GM12878 (cell line): ENCODE measurements at regions of chr17 and their contacts with region 1.

Region 1: GRCh38 chr17:79892459-79892858 is 53.2 kb upstream of the CBX4 start:
- DNase-seq: no peak
- ATAC-seq: no peak
- H3K4me3 ChIP-seq: no peak overlapping the region
- H3K27ac ChIP-seq: no peak overlapping the region
- H3K4me1 ChIP-seq: no peaks in the 10 kb centered on the region
- H3K27me3 ChIP-seq: peaks cover 1 to 4% of the 10 kb centered on the region in 2 experiments; a peak in 1 of 4 replicates
- CTCF ChIP-seq: no peak
- EP300 ChIP-seq: no peak
- POLR2A ChIP-seq: no peak
- RAD21 ChIP-seq: no peak

Region 2: DNA sequence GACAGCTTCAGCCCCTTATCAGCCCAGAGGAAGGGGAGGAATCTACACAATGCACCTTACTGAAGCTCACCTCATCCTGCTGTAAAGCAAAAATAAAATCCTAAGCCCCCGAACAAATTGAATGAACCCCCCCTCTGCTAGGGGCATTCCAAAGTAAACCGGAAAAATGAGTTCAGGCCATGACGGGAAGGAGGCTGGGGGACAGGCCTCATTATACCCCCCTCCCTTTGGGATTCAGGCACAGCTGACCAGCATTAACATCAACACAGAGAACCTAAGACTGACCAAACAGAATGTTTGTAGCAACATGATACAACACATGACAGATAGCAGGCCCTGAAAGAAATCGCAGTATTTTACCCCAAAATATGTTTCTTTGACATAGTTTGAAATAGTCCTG is 1379.5 kb before region 1 on chr17:
- CTCF ChIA-PET with region 1: no interaction called
- POLR2A ChIA-PET with region 1: interaction called, 13 read pairs
- RAD21 ChIA-PET with region 1: no interaction called
- SMC1A ChIA-PET with region 1: no interaction called
- in situ Hi-C with region 1: no loop called
- intact Hi-C with region 1: no loop called
- DNase-seq: no peak
- ATAC-seq: no peak
- H3K4me3 ChIP-seq: no peak overlapping the region
- H3K27ac ChIP-seq: no peak overlapping the region
- H3K4me1 ChIP-seq: no peaks in the 10 kb centered on the region
- H3K27me3 ChIP-seq: no peaks in the 10 kb centered on the region
- CTCF ChIP-seq: no peak
- EP300 ChIP-seq: no peak
- POLR2A ChIP-seq: no peak
- RAD21 ChIP-seq: no peak

Region 3: GRCh38 chr17:79658811-79659207 is 233.7 kb before region 1 on chr17:
- CTCF ChIA-PET with region 1: no interaction called
- POLR2A ChIA-PET with region 1: no interaction called
- RAD21 ChIA-PET with region 1: no interaction called
- SMC1A ChIA-PET with region 1: no interaction called
- in situ Hi-C with region 1: no loop called
- intact Hi-C with region 1: no loop called
- DNase-seq: no peak
- ATAC-seq: 0 out of 3 replicates have a peak, but pooled peaks have one; percentile 31
- H3K4me3 ChIP-seq: no peak overlapping the region
- H3K27ac ChIP-seq: no peak overlapping the region
- H3K4me1 ChIP-seq: no peaks in the 10 kb centered on the region
- H3K27me3 ChIP-seq: peaks cover 0 to 2% of the 10 kb centered on the region in 2 experiments; a peak in 2 of 4 replicates
- CTCF ChIP-seq: peak; percentile 16 to 28 (median 21); a peak in 1 of 6 replicates
- EP300 ChIP-seq: no peak
- POLR2A ChIP-seq: no peak
- RAD21 ChIP-seq: no peak

Region 4: GRCh38 chr17:80260069-80260554 is 367.7 kb after region 1 on chr17:
- CTCF ChIA-PET with region 1: no interaction called
- POLR2A ChIA-PET with region 1: no interaction called
- RAD21 ChIA-PET with region 1: no interaction called
- SMC1A ChIA-PET with region 1: no interaction called
- in situ Hi-C with region 1: no loop called
- intact Hi-C with region 1: no loop called
- DNase-seq: no peak
- ATAC-seq: peak; percentile 38
- H3K4me3 ChIP-seq: peak overlapping the region; percentile 53; the same call in 1 of the 2 replicates
- H3K27ac ChIP-seq: peak overlapping the region; percentile 69
- H3K4me1 ChIP-seq: peaks cover 54% of the 10 kb centered on the region
- H3K27me3 ChIP-seq: no peaks in the 10 kb centered on the region
- CTCF ChIP-seq: no peak
- EP300 ChIP-seq: no peak
- POLR2A ChIP-seq: no peak; the same call in 1 of the 2 replicates
- RAD21 ChIP-seq: no peak